ENCODE measurements at regions of chr9 and their contacts with region 1.

Region 1: GRCh38 chr9:133417541-133418461 is at the start of gene REXO4:
- DNase-seq: peak; percentile 51
- H3K4me3 ChIP-seq: peak within 1 kb of the TSS; percentile 67 to 84
- H3K27ac ChIP-seq: peak within 1 kb of the TSS; percentile 71 to 78
- H3K4me1 ChIP-seq: no peaks in the 10 kb centered on the region
- H3K27me3 ChIP-seq: no peaks in the 10 kb centered on the region
- CTCF ChIP-seq: no peak
- POLR2A ChIP-seq: peak; percentile 20
- total RNA-seq, gene REXO4: 20.8 to 34.5 TPM

Region 2: DNA sequence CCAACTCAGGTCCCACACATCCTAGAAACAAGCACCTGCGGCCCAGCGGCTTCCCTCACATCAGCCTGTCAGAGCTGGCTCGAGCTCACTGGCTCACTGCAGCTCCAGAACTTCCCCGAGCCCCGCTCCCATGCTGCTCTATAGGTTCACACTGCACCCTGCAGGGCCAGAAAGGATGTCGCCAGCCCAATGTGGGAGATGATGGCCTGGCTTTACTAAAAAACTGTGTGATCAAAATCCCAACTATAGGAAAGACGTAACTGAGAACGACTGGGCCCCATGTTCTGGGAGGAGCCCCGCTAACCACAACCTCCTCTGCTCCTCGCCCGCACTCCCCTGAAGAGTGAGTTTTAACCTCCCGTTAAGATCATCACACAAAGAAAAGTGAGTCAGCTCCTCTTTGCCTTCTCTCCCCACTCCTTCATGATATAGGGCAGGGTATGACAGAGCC is 46.5 kb before region 1 on chr9:
- intact Hi-C with region 1: no loop called
- DNase-seq: no peak
- H3K4me3 ChIP-seq: no peak overlapping the region
- H3K27ac ChIP-seq: no peak overlapping the region
- H3K4me1 ChIP-seq: peaks cover 24% of the 10 kb centered on the region
- H3K27me3 ChIP-seq: no peaks in the 10 kb centered on the region
- CTCF ChIP-seq: no peak
- POLR2A ChIP-seq: no peak

Region 3: GRCh38 chr9:133459476-133460404 is 41.9 kb after region 1 on chr9 and contains the start of gene CACFD1:
- intact Hi-C with region 1: loop called (anchors 5 kb)
- DNase-seq: peak; percentile 97
- H3K4me3 ChIP-seq: peak within 1 kb of the TSS; percentile 75 to 81
- H3K27ac ChIP-seq: peak within 1 kb of the TSS; percentile 95
- H3K4me1 ChIP-seq: peaks cover 4% of the 10 kb centered on the region
- H3K27me3 ChIP-seq: no peaks in the 10 kb centered on the region
- CTCF ChIP-seq: peak in 2 of 4 experiments; percentile 27 to 33
- POLR2A ChIP-seq: peak; percentile 84
- total RNA-seq, gene CACFD1: 23.0 to 40.2 TPM

Measured in prostate gland (tissue), 2 donors.